ENCODE measurements at regions of chr6 and their contacts with region 1.

Region 1: GRCh38 chr6:170271771-170272314 is 19.0 kb downstream of the DLL1 start:
- DNase-seq: peak; percentile 88
- H3K4me3 Mint-ChIP-seq: peak overlapping the region; percentile 60
- H3K27ac Mint-ChIP-seq: peak overlapping the region; percentile 33
- H3K4me1 Mint-ChIP-seq: peaks cover 18% of the 10 kb centered on the region
- H3K27me3 Mint-ChIP-seq: peaks cover 18% of the 10 kb centered on the region

Region 2: DNA sequence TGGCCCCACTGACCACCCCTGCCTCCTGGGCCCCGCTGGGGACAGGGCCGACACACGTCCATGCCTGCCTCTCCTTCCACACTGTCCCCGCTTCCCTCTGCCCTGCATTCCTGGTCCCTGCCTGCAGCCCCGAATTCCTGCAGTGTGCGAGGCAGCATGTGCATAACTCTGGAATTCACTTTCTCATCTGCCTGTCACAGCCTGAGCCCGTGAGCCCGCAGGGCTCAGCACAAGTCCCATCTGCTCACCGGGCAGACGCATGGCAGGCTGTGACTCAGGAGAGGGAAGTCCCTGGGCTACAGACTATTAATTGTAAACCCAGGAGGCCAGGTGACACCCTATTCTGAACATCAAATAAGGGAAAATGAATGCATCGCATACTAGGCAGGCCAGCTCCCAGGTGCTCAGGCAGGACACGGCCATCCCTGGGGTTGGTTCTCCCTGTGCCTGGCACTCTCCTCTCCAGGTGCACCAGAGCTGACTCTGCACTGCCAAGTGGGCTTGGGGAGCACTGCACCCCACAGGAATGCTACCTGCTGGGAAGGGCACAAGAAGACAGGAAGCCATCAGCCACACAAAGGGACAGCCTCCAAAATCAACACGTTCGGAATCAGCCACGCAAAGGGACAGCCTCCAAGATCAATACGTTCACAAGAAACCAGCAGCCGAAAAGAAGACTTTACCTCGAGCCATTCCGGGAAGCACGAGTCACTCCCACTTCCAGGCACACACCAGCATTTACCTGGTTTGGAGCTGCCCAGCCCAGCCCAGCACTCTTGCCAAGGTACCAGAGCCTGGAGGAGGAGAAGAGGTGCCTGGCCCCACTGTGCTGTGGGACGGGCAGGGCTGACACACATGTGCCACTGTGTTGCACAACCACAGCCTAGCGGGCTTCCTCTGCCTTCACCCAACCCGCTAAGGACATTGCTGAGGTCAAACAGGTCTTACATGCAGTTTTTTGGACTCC is 46.9 kb before region 1 on chr6:
- CTCF ChIA-PET with region 1: no interaction called
- POLR2A ChIA-PET with region 1: no interaction called
- intact Hi-C with region 1: no loop called
- DNase-seq: no peak
- H3K4me3 Mint-ChIP-seq: no peak overlapping the region
- H3K27ac Mint-ChIP-seq: no peak overlapping the region
- H3K4me1 Mint-ChIP-seq: peaks cover 15% of the 10 kb centered on the region
- H3K27me3 Mint-ChIP-seq: no peaks in the 10 kb centered on the region

Region 3: DNA sequence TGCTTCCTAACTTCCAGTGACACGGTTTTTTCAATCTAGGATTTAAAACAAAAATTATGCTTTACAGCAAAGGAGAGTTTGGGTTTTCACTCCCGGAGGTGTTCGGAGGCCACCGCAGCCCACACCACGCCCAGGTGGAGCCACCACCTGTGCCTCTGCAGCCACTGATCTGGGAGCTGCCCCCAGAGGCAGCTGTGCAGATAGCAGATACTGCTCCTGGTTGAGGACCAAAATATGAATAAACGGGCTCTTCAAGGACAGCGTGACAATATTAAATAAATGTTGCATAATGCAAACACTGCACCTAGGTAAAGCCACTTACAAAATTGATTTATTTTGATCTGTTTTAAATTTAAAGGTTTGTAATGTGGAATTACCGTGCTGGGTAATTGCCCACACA is 11.1 kb before region 1 on chr6:
- CTCF ChIA-PET with region 1: no interaction called
- POLR2A ChIA-PET with region 1: no interaction called
- intact Hi-C with region 1: no loop called
- DNase-seq: no peak
- H3K4me3 Mint-ChIP-seq: no peak overlapping the region
- H3K27ac Mint-ChIP-seq: no peak overlapping the region
- H3K4me1 Mint-ChIP-seq: no peaks in the 10 kb centered on the region
- H3K27me3 Mint-ChIP-seq: peaks cover 6% of the 10 kb centered on the region

Region 4: GRCh38 chr6:170290306-170291128 is 18.7 kb after region 1 on chr6 and contains the start of gene DLL1:
- CTCF ChIA-PET with region 1: interaction called, 3 read pairs
- POLR2A ChIA-PET with region 1: no interaction called
- intact Hi-C with region 1: loop called (anchors 1 kb)
- DNase-seq: peak; percentile 45
- H3K4me3 Mint-ChIP-seq: peak within 1 kb of the TSS; percentile 78
- H3K27ac Mint-ChIP-seq: peak within 1 kb of the TSS; percentile 54
- H3K4me1 Mint-ChIP-seq: peaks cover 38% of the 10 kb centered on the region
- H3K27me3 Mint-ChIP-seq: peaks cover 57% of the 10 kb centered on the region
- total RNA-seq, gene DLL1: 0.41 to 0.55 TPM

Measured in activated CD4-positive, alpha-beta memory T cell treated with anti-CD3 and anti-CD28 coated beads for 36 hours (primary cell).